CD14-positive monocyte (primary cell): ENCODE measurements at regions of chr10 and their contacts with region 1.

Region 1: GRCh38 chr10:102394079-102394800 is 1.3 kb upstream of the NFKB2 start:
- DNase-seq: peak; percentile 98 to 99 (median 98)
- H3K4me3 ChIP-seq: peak overlapping the region; percentile 84 to 94 (median 89)
- H3K4me3 Mint-ChIP-seq: peak overlapping the region; percentile 91 to 95
- H3K27ac ChIP-seq: peak overlapping the region; percentile 96 to 100
- H3K27ac Mint-ChIP-seq: peak overlapping the region; percentile 98 to 100 (median 99)
- H3K4me1 ChIP-seq: peaks cover 28 to 39% of the 10 kb centered on the region in 2 donors
- H3K4me1 Mint-ChIP-seq: peaks cover 33% of the 10 kb centered on the region
- H3K27me3 ChIP-seq: peaks cover 0 to 13% of the 10 kb centered on the region in 2 donors
- H3K27me3 Mint-ChIP-seq: peaks cover 9 to 24% (median 19%) of the 10 kb centered on the region in 3 donors
- CTCF ChIP-seq: peak; percentile 65

Region 2: DNA sequence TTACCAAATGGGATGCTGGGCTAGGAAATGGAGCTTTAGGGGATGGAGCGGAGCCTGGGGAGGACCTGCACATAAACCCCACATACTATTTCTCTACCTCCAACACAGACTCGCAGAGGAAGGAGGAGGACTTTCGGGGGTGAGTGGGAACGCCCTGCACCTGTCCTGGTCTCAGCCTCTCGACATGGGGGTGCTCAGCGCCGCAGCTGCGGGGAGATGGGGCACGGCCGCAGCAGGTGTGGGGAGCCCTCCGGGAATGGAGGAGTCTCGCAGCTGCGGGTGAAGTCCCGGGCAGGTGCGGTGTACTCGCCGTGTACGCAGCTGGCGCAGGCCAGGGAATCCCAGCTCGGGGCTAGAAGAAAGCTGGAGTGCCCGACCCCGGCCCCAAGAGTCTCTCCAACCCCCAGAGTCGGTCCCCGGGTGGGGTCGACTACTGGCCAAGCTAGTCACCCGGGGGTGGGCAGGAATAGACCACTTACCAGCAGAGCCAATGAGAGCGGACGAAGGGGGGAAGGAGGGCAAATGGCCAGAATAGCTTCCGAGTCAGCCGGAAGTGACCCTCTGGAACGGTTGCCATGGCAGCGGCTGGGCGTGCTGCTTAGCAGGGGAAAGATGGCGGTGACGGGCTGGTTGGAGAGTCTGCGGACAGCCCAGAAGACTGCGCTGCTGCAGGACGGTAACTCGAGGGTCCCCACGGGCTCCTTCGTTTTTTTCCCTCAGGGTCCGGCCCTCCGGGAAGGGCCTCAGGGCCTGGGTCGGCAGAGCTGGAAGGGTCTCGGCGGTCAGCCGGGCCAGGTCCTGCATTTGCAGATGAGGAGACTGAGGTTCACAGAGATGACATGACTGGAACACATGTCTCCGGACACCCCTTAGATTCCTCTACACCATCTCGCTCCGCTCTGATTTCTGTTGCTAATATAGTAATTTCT is 806.3 kb before region 1 on chr10 and contains the starts of genes DPCD and POLL:
- intact Hi-C with region 1: no loop called
- DNase-seq: peak; percentile 83 to 94 (median 90)
- H3K4me3 ChIP-seq: peak within 1 kb of the TSS; percentile 70 to 99 (median 90)
- H3K4me3 Mint-ChIP-seq: peak within 1 kb of the TSS; percentile 93 to 94
- H3K27ac ChIP-seq: peak within 1 kb of the TSS in 1 of 2 donors; percentile 84
- H3K27ac Mint-ChIP-seq: peak within 1 kb of the TSS; percentile 81 to 92 (median 86)
- H3K4me1 ChIP-seq: peaks cover 39 to 45% of the 10 kb centered on the region in 2 donors
- H3K4me1 Mint-ChIP-seq: peaks cover 38% of the 10 kb centered on the region
- H3K27me3 ChIP-seq: no peaks in the 10 kb centered on the region
- H3K27me3 Mint-ChIP-seq: peaks cover 0 to 1% (median 0%) of the 10 kb centered on the region in 3 donors
- CTCF ChIP-seq: no peak
- polyA plus RNA-seq, gene DPCD: 8.6 to 17.0 (median 9.0) TPM
- polyA plus RNA-seq, gene POLL: 9.9 to 37.0 (median 10.6) TPM

Region 3: DNA sequence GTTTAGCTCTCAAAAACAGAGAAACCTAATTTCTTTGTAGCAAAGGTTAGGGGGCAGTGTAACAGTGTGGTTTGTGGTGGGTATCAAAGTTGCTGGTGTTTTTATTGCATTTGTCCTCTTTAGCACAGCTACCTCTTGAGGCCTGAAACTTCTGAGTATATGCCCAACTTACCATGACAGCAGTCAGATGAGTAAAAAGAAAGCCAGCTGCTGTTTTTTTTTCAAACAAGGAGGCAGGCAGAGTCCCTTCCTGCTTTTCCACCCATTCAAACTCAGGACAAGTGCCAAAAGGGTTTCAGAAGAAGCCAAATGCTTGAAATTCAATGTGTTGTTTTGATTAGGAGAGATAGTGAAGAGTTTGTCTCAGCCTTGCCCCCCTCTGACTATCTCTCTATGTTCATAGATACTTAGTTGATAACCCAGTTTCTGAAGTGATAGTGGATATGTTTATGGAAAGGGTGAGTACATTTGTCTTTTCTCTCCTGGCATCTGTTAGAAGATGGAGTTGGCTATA is 125.8 kb before region 1 on chr10:
- intact Hi-C with region 1: no loop called
- DNase-seq: no peak
- H3K4me3 ChIP-seq: no peak overlapping the region
- H3K4me3 Mint-ChIP-seq: no peak overlapping the region
- H3K27ac ChIP-seq: no peak overlapping the region
- H3K27ac Mint-ChIP-seq: no peak overlapping the region
- H3K4me1 ChIP-seq: no peaks in the 10 kb centered on the region
- H3K4me1 Mint-ChIP-seq: peaks cover 12% of the 10 kb centered on the region
- H3K27me3 ChIP-seq: no peaks in the 10 kb centered on the region
- H3K27me3 Mint-ChIP-seq: no peaks in the 10 kb centered on the region
- CTCF ChIP-seq: no peak

Region 4: GRCh38 chr10:102358712-102359382 is 35.4 kb before region 1 on chr10:
- intact Hi-C with region 1: no loop called
- DNase-seq: no peak
- H3K4me3 ChIP-seq: no peak overlapping the region
- H3K4me3 Mint-ChIP-seq: no peak overlapping the region
- H3K27ac ChIP-seq: no peak overlapping the region
- H3K27ac Mint-ChIP-seq: peak overlapping the region in 1 of 7 donors; percentile 59
- H3K4me1 ChIP-seq: no peaks in the 10 kb centered on the region
- H3K4me1 Mint-ChIP-seq: no peaks in the 10 kb centered on the region
- H3K27me3 ChIP-seq: no peaks in the 10 kb centered on the region
- H3K27me3 Mint-ChIP-seq: peaks cover 0 to 2% (median 0%) of the 10 kb centered on the region in 3 donors
- CTCF ChIP-seq: no peak

Region 5: GRCh38 chr10:102432162-102432950 is 38.1 kb after region 1 on chr10 and contains the start of gene CUEDC2:
- intact Hi-C with region 1: loop called in 1 of 2 experiments (anchors 2 kb)
- DNase-seq: peak; percentile 91 to 95 (median 94)
- H3K4me3 ChIP-seq: peak within 1 kb of the TSS; percentile 57 to 97 (median 92)
- H3K4me3 Mint-ChIP-seq: peak within 1 kb of the TSS; percentile 86 to 89
- H3K27ac ChIP-seq: peak within 1 kb of the TSS; percentile 41 to 87
- H3K27ac Mint-ChIP-seq: peak within 1 kb of the TSS; percentile 89 to 94 (median 92)
- H3K4me1 ChIP-seq: peaks cover 41% of the 10 kb centered on the region in 2 donors
- H3K4me1 Mint-ChIP-seq: peaks cover 45% of the 10 kb centered on the region
- H3K27me3 ChIP-seq: no peaks in the 10 kb centered on the region
- H3K27me3 Mint-ChIP-seq: no peaks in the 10 kb centered on the region
- CTCF ChIP-seq: no peak
- polyA plus RNA-seq, gene CUEDC2: 58.5 to 70.2 (median 66.7) TPM

Region 6: DNA sequence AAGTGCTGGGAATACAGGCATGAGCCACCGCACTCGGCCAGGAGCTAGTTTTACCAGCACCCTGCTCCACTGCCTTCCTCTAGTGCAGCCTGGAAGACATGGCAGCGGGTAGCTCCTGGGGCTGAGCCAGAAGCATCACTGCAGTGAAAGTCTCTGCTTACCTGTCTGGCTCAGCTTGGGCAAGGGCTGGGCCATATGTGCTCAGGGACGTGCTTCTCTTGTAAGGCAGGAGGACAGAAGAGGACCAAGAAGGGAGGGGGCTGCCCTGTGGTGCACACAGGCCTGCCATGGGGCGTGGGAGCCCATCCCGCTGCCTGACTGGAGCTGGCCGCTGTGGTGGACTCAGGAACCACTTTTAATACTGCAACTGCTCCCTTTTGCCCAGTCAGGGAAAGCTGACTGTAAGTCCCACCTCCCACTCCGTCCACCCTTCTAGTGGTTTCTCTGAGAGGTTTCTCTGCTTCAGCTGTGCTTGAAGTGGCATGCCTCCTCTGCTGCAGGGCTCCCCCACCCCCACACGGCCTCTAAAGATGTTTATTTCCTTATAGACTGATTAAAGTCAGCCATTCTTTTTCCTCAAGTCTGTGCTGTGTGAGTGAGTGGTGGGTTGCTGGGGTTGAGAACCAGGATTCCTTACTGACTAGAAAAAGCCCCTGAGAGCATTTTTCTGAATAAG is 82.4 kb after region 1 on chr10:
- intact Hi-C with region 1: loop called (anchors 5 to 10 kb)
- DNase-seq: peak in 1 of 3 donors; percentile 2
- H3K4me3 ChIP-seq: no peak overlapping the region
- H3K4me3 Mint-ChIP-seq: no peak overlapping the region
- H3K27ac ChIP-seq: no peak overlapping the region
- H3K27ac Mint-ChIP-seq: no peak overlapping the region
- H3K4me1 ChIP-seq: peaks cover 0 to 6% of the 10 kb centered on the region in 2 donors
- H3K4me1 Mint-ChIP-seq: peaks cover 9% of the 10 kb centered on the region
- H3K27me3 ChIP-seq: no peaks in the 10 kb centered on the region
- H3K27me3 Mint-ChIP-seq: no peaks in the 10 kb centered on the region
- CTCF ChIP-seq: no peak

Region 7: GRCh38 chr10:102485093-102485784 is 91.0 kb after region 1 on chr10:
- intact Hi-C with region 1: loop called in 1 of 2 experiments (anchors 5 kb)
- DNase-seq: no peak
- H3K4me3 ChIP-seq: no peak overlapping the region
- H3K4me3 Mint-ChIP-seq: no peak overlapping the region
- H3K27ac ChIP-seq: no peak overlapping the region
- H3K27ac Mint-ChIP-seq: peak overlapping the region in 2 of 7 donors; percentile 51 to 70
- H3K4me1 ChIP-seq: no peaks in the 10 kb centered on the region
- H3K4me1 Mint-ChIP-seq: no peaks in the 10 kb centered on the region
- H3K27me3 ChIP-seq: no peaks in the 10 kb centered on the region
- H3K27me3 Mint-ChIP-seq: no peaks in the 10 kb centered on the region
- CTCF ChIP-seq: no peak

Region 8: GRCh38 chr10:102583435-102584417 is 189.5 kb after region 1 on chr10:
- intact Hi-C with region 1: loop called in 1 of 2 experiments (anchors 10 kb)
- DNase-seq: peak; percentile 68 to 85 (median 78)
- H3K4me3 ChIP-seq: no peak overlapping the region
- H3K4me3 Mint-ChIP-seq: no peak overlapping the region
- H3K27ac ChIP-seq: no peak overlapping the region
- H3K27ac Mint-ChIP-seq: no peak overlapping the region
- H3K4me1 ChIP-seq: peaks cover 19% of the 10 kb centered on the region in 2 donors
- H3K4me1 Mint-ChIP-seq: peaks cover 23% of the 10 kb centered on the region
- H3K27me3 ChIP-seq: no peaks in the 10 kb centered on the region
- H3K27me3 Mint-ChIP-seq: peaks cover 0 to 3% (median 0%) of the 10 kb centered on the region in 3 donors
- CTCF ChIP-seq: peak; percentile 87